CD4-positive, alpha-beta memory T cell (primary cell): ENCODE measurements at regions of chr4 and their contacts with region 1.

Region 1: DNA sequence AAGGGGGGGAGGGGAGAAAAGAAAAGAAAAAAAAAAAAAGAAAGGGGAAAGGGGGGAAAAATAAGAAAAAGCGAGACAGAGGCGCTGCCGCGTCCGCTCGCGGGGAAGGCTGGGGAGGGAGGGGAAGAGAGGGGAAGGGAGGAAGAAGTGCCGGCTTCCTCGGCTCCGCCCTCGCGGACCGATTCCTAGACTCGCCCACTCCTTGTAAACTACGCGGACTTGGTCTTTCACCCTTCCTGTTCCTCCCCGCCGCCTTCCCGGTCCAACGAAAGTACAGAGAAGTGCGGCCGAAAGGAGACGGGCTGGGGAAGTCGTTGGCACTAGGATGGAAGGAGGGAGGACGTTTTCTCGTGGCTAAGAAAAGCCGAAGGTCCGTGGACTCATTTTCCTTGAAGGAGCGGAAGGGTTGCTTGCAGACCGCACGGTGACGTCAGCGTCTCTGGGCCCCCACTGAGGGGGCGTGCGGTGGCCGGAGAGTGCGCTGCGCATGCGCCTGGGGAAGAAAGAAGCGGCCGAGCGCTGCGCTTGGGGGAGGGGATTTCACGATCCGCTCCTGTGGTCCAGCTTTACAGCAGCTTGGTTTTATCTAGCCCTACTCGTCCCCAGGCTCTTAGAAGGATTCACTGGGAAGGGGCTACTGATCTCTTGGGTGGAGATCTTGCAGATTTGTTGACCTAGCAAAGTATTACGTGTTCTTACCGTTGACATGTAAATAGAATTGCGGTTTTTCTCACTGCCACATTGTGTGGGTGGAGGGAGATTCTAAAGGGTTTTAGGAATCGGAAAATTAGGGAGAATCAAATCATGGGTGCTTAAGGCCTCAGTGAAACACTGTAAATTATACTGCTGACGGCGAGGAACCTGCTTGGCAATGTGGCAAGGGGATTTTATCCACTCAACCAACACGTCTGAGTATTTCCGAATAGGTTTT is at the start of gene CCNI:
- DNase-seq: peak; percentile 94 to 97 (median 96)
- H3K4me3 ChIP-seq: peak within 1 kb of the TSS; percentile 93 to 98
- H3K4me3 Mint-ChIP-seq: peak within 1 kb of the TSS in 6 of 8 donors; percentile 97 to 99 (median 99)
- H3K27ac ChIP-seq: peak within 1 kb of the TSS; percentile 99
- H3K27ac Mint-ChIP-seq: peak within 1 kb of the TSS in 6 of 7 donors; percentile 100
- H3K4me1 ChIP-seq: peaks cover 49% of the 10 kb centered on the region
- H3K4me1 Mint-ChIP-seq: peaks cover 28 to 39% (median 32%) of the 10 kb centered on the region in 4 donors
- H3K27me3 ChIP-seq: no peaks in the 10 kb centered on the region
- H3K27me3 Mint-ChIP-seq: peaks cover 1 to 4% of the 10 kb centered on the region in 2 donors
- total RNA-seq, gene CCNI: 353 to 360 TPM

Region 2: GRCh38 chr4:75940692-75941253 is 1135.4 kb before region 1 on chr4 and contains the start of gene NAAA:
- CTCF ChIA-PET with region 1: no interaction called
- POLR2A ChIA-PET with region 1: interaction called, 4 read pairs
- intact Hi-C with region 1: loop called (anchors 10 kb)
- DNase-seq: peak; percentile 73 to 84 (median 80)
- H3K4me3 ChIP-seq: peak within 1 kb of the TSS; percentile 80 to 98
- H3K4me3 Mint-ChIP-seq: peak within 1 kb of the TSS; percentile 97 to 99 (median 98)
- H3K27ac ChIP-seq: peak within 1 kb of the TSS; percentile 75
- H3K27ac Mint-ChIP-seq: peak within 1 kb of the TSS; percentile 96 to 98 (median 98)
- H3K4me1 ChIP-seq: peaks cover 19% of the 10 kb centered on the region
- H3K4me1 Mint-ChIP-seq: peaks cover 10 to 35% (median 19%) of the 10 kb centered on the region in 4 donors
- H3K27me3 ChIP-seq: no peaks in the 10 kb centered on the region
- H3K27me3 Mint-ChIP-seq: no peaks in the 10 kb centered on the region
- total RNA-seq, gene NAAA: 86.1 to 92.2 TPM

Region 3: GRCh38 chr4:76856243-76857073 is 219.7 kb before region 1 on chr4:
- CTCF ChIA-PET with region 1: no interaction called
- POLR2A ChIA-PET with region 1: no interaction called
- intact Hi-C with region 1: no loop called
- DNase-seq: no peak
- H3K4me3 ChIP-seq: no peak overlapping the region
- H3K4me3 Mint-ChIP-seq: no peak overlapping the region
- H3K27ac ChIP-seq: no peak overlapping the region
- H3K27ac Mint-ChIP-seq: no peak overlapping the region
- H3K4me1 ChIP-seq: no peaks in the 10 kb centered on the region
- H3K4me1 Mint-ChIP-seq: peaks cover 0 to 4% (median 2%) of the 10 kb centered on the region in 4 donors
- H3K27me3 ChIP-seq: no peaks in the 10 kb centered on the region
- H3K27me3 Mint-ChIP-seq: peaks cover 2 to 3% of the 10 kb centered on the region in 2 donors

Region 4: GRCh38 chr4:76949276-76950051 is 126.7 kb before region 1 on chr4 and contains the start of gene SEPTIN11:
- CTCF ChIA-PET with region 1: no interaction called
- POLR2A ChIA-PET with region 1: no interaction called
- intact Hi-C with region 1: loop called (anchors 1 kb)
- DNase-seq: peak; percentile 83 to 90 (median 85)
- H3K4me3 ChIP-seq: peak within 1 kb of the TSS; percentile 83 to 86
- H3K4me3 Mint-ChIP-seq: peak within 1 kb of the TSS; percentile 90 to 94 (median 93)
- H3K27ac ChIP-seq: peak within 1 kb of the TSS; percentile 59
- H3K27ac Mint-ChIP-seq: peak within 1 kb of the TSS; percentile 79 to 94 (median 91)
- H3K4me1 ChIP-seq: peaks cover 23% of the 10 kb centered on the region
- H3K4me1 Mint-ChIP-seq: peaks cover 8 to 41% (median 23%) of the 10 kb centered on the region in 4 donors
- H3K27me3 ChIP-seq: no peaks in the 10 kb centered on the region
- H3K27me3 Mint-ChIP-seq: no peaks in the 10 kb centered on the region
- total RNA-seq, gene SEPTIN11: 25.2 to 30.2 TPM

Region 5: DNA sequence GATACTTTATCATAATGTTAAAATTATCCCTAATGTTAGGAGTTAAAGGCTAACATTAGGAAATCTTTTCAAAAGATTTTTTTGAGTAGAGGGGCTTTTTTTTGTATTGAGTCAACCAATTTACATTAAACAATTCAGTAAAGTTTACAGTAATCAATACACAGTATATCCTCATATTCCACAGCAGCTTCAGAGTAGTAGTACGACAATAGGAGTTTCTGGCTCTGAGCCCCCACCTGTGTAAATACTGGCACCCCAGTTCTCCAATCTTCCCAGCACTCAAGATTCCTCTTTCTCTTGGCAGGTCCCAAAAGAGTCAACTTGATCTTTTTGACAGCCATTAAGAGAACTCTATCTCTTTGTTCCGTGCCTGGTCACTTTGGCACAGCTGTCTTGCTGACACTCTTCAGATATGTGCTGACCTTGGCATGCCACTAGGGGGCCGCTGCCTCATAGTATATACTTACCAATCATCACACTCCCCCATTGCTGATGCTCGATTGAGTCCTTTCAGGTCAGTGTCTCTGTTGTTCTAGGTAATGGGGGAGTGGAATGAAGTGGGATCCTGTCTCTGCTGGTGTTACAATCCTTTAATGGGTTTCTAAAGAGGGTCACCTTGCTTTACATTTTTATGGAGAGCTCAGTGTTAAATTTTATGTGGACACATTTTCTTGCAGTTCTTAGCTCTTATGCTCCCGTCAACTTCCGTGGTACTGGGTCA is 19.1 kb after region 1 on chr4:
- CTCF ChIA-PET with region 1: interaction called, 23 read pairs
- POLR2A ChIA-PET with region 1: interaction called, 7 read pairs
- intact Hi-C with region 1: loop called (anchors 1 kb)
- DNase-seq: peak; percentile 58 to 70 (median 64)
- H3K4me3 ChIP-seq: no peak overlapping the region
- H3K4me3 Mint-ChIP-seq: no peak overlapping the region
- H3K27ac ChIP-seq: no peak overlapping the region
- H3K27ac Mint-ChIP-seq: peak overlapping the region in 1 of 7 donors; percentile 5
- H3K4me1 ChIP-seq: peaks cover 11% of the 10 kb centered on the region
- H3K4me1 Mint-ChIP-seq: peaks cover 9 to 19% (median 13%) of the 10 kb centered on the region in 4 donors
- H3K27me3 ChIP-seq: no peaks in the 10 kb centered on the region
- H3K27me3 Mint-ChIP-seq: no peaks in the 10 kb centered on the region

Region 6: DNA sequence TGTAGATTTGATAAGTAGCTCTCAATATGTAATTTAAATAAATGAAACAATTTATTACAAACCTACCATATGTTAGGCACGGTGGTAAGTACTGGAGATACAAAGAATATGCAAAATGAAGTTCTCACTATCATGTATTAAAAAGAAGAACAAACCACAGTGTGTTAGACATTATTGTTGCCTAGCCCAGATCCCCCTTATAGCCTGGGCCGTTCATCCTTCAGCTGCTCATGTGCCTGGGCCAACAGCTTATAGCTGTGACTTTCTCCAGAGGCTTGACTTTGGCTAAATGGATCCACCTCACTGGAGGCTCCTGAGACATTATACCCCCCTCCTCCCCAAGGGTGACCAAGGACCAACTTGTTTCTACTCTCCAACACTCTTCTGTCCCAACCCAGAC is 51.1 kb after region 1 on chr4:
- CTCF ChIA-PET with region 1: no interaction called
- POLR2A ChIA-PET with region 1: no interaction called
- intact Hi-C with region 1: no loop called
- DNase-seq: no peak
- H3K4me3 ChIP-seq: no peak overlapping the region
- H3K4me3 Mint-ChIP-seq: no peak overlapping the region
- H3K27ac ChIP-seq: no peak overlapping the region
- H3K27ac Mint-ChIP-seq: peak overlapping the region in 4 of 7 donors; percentile 0 to 69 (median 2)
- H3K4me1 ChIP-seq: peaks cover 11% of the 10 kb centered on the region
- H3K4me1 Mint-ChIP-seq: peaks cover 2 to 17% (median 7%) of the 10 kb centered on the region in 4 donors
- H3K27me3 ChIP-seq: no peaks in the 10 kb centered on the region
- H3K27me3 Mint-ChIP-seq: peaks cover 3 to 5% of the 10 kb centered on the region in 2 donors

Region 7: DNA sequence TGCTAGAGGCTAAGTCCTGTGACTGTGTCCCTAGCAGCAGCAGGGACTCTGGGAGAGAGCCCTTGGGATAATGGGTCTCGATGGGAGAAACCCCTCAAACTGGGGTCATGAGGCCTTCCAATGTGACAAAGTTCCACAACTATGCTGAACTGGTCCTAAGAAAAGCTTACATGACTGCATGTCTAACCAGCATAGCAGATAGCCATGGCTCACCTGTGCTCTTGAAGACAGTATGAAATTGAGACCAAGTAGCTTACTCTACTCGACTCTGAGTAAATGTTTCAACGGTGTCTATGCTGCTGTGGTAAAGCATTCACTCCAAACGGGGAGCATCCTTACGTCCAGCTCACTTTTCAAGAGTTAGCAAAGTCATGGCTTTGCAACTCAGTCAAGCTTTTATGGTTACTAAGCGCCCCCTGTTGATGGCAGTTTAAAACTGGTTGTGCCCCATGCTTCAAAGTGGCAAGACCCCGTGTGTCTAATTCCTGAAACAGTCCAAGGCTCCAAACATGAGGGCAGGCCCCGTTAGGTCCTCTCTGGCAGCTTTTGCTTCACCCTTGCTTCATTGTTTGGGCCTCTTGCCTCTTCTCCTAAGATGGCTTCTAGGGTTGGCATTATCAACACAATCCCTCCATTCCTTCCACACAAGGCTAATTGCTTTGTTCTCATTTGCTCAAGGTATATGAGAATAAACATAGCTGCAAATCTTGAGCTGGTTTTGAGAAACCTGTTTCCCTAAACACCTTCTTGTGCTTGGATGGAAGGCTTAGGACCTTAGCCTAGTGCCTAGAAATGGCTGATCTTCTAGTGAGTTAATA is 127.5 kb after region 1 on chr4:
- CTCF ChIA-PET with region 1: interaction called, 17 read pairs
- POLR2A ChIA-PET with region 1: interaction called, 3 read pairs
- intact Hi-C with region 1: no loop called
- DNase-seq: peak; percentile 45 to 68 (median 63)
- H3K4me3 ChIP-seq: no peak overlapping the region
- H3K4me3 Mint-ChIP-seq: no peak overlapping the region
- H3K27ac ChIP-seq: no peak overlapping the region
- H3K27ac Mint-ChIP-seq: no peak overlapping the region
- H3K4me1 ChIP-seq: no peaks in the 10 kb centered on the region
- H3K4me1 Mint-ChIP-seq: no peaks in the 10 kb centered on the region
- H3K27me3 ChIP-seq: no peaks in the 10 kb centered on the region
- H3K27me3 Mint-ChIP-seq: no peaks in the 10 kb centered on the region

Region 8: DNA sequence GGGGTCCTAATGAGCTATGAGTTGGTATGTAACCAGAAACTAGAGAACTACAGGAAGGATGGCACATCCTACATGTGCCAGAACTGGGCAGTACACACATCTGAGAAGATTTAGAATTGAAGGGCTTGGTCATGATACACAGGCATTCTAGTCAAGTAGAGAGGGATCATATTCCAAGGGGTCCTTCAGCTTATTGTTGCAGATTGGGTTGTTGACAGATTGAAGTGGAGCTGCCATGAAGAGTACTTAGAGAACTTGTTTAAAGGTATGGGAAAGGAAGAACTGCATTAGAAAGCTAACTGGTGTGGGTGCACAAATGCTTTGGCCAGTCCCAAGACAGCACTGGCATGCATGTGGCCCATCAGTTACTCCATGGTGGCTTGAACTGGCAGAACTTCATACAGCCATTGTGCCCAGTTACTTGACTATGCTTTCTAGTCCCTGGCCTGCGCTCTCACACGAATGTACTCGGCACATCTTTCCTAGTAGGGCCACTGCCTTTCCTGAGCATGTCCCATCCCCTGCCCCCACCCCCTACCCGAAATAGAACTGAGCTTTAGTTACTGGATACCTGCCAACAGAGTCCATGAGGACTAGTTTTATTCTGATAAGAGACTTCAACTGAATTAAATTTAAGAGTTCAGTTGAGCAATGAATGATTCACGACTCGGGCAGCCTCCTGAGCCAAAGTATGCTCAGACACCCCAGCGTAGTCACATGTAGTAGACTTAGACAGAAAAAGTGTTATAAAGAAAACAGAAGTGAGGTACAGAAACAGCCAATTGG is 144.9 kb after region 1 on chr4:
- CTCF ChIA-PET with region 1: no interaction called
- POLR2A ChIA-PET with region 1: no interaction called
- intact Hi-C with region 1: no loop called
- DNase-seq: no peak
- H3K4me3 ChIP-seq: no peak overlapping the region
- H3K4me3 Mint-ChIP-seq: no peak overlapping the region
- H3K27ac ChIP-seq: no peak overlapping the region
- H3K27ac Mint-ChIP-seq: no peak overlapping the region
- H3K4me1 ChIP-seq: no peaks in the 10 kb centered on the region
- H3K4me1 Mint-ChIP-seq: no peaks in the 10 kb centered on the region
- H3K27me3 ChIP-seq: no peaks in the 10 kb centered on the region
- H3K27me3 Mint-ChIP-seq: peaks cover 9 to 12% of the 10 kb centered on the region in 2 donors